Left colon (tissue), 2 donors: ENCODE measurements at regions of chr4 and their contacts with region 1.

Region 1: DNA sequence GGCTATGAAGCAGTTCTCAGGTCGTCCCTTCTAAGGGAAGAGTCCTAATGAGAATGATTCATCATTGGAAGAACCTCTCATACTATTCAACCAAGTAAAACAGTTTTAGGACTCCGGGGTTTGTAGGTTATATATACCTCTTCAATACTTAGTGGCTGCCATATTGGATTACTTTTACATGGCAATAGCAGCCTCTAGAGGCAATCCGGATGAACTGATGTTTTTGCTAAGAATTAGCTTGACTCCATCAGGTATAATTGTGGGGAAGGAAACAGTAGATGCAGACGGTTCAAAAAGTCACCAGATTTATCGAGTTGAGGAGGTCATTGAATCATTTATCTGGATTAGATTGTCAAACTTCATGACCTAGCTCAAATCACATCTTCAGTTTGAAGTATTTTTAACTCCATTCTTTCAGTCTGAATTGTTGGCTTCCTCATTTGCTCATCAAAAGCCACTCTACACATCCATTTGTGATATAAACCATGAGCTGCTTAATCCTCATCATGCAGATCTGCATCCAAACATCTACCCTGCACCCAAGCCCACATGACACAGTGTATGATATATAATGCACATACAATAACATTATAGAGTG is 28.4 kb downstream of the GUCY1B1 start:
- DNase-seq: no peak
- ATAC-seq: peak; percentile 64

Region 2: DNA sequence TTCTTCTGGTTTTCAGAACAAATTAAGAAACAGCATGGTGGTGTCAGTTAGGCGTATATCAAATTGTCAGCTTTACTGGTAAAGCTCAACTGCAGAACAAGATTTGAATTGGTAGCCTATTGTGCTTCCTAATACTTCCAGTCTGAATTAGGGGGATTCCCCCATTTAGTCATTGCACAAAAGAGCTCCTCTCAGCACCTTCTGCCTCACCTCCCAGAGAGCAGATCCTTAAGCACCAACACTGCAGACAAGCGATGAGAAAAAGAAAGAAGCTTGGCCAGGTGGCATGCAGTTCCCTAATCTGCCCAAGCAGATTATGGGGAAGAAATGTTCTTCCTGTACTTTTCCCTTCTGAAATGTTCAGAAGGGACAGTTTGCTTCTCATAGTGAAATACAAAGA is 419.6 kb before region 1 on chr4:
- intact Hi-C with region 1: no loop called
- DNase-seq: no peak
- ATAC-seq: no peak

Region 3: GRCh38 chr4:155442267-155443105 is 344.7 kb before region 1 on chr4:
- intact Hi-C with region 1: loop called in 1 of 2 experiments (anchors 5 kb)
- DNase-seq: peak; percentile 39 to 76
- ATAC-seq: peak; percentile 67